IMR-90 (cell line): ENCODE measurements at regions of chr20 and their contacts with region 1.

Region 1: GRCh38 chr20:11544029-11544678 is 373.5 kb upstream of the BTBD3 start:
- DNase-seq: peak; percentile 75
- ATAC-seq: peak; percentile 82
- H3K4me3 ChIP-seq: no peak overlapping the region; the same call in 1 of the 2 replicates
- H3K27ac ChIP-seq: no peak overlapping the region
- H3K4me1 ChIP-seq: no peaks in the 10 kb centered on the region; the same call in none of the 2 replicates
- H3K27me3 ChIP-seq: peaks cover 4% of the 10 kb centered on the region; the same call in 1 of the 2 replicates
- CTCF ChIP-seq: peak; percentile 71
- POLR2A ChIP-seq: no peak
- RAD21 ChIP-seq: peak; percentile 87

Region 2: GRCh38 chr20:9616833-9617489 is 1927.2 kb before region 1 on chr20:
- CTCF ChIA-PET with region 1: no interaction called
- POLR2A ChIA-PET with region 1: no interaction called
- dilution Hi-C with region 1: no loop called
- in situ Hi-C with region 1: no loop called
- intact Hi-C with region 1: loop called (anchors 10 kb)
- DNase-seq: peak; percentile 66
- ATAC-seq: peak; percentile 81
- H3K4me3 ChIP-seq: no peak overlapping the region
- H3K27ac ChIP-seq: no peak overlapping the region
- H3K4me1 ChIP-seq: no peaks in the 10 kb centered on the region
- H3K27me3 ChIP-seq: peaks cover 17% of the 10 kb centered on the region
- CTCF ChIP-seq: peak; percentile 93
- POLR2A ChIP-seq: no peak
- RAD21 ChIP-seq: peak; percentile 87

Region 3: GRCh38 chr20:10434467-10434831 is 1109.7 kb before region 1 on chr20:
- CTCF ChIA-PET with region 1: interaction called, 4 read pairs
- POLR2A ChIA-PET with region 1: no interaction called
- dilution Hi-C with region 1: no loop called
- in situ Hi-C with region 1: no loop called
- intact Hi-C with region 1: loop called (anchors 10 kb)
- DNase-seq: peak; percentile 99
- ATAC-seq: peak; percentile 87
- H3K4me3 ChIP-seq: peak overlapping the region; percentile 89
- H3K27ac ChIP-seq: peak overlapping the region; percentile 33; the same call in 1 of the 2 replicates
- H3K4me1 ChIP-seq: peaks cover 2% of the 10 kb centered on the region; the same call in 1 of the 2 replicates
- H3K27me3 ChIP-seq: no peaks in the 10 kb centered on the region
- CTCF ChIP-seq: no peak
- POLR2A ChIP-seq: peak; percentile 95
- RAD21 ChIP-seq: no peak

Region 4: GRCh38 chr20:10553326-10553984 is 990.7 kb before region 1 on chr20:
- CTCF ChIA-PET with region 1: no interaction called
- POLR2A ChIA-PET with region 1: no interaction called
- dilution Hi-C with region 1: no loop called
- in situ Hi-C with region 1: loop called (anchors 5 kb)
- intact Hi-C with region 1: loop called (anchors 1 kb)
- DNase-seq: peak; percentile 82
- ATAC-seq: peak; percentile 88
- H3K4me3 ChIP-seq: no peak overlapping the region
- H3K27ac ChIP-seq: no peak overlapping the region
- H3K4me1 ChIP-seq: peaks cover 11% of the 10 kb centered on the region
- H3K27me3 ChIP-seq: no peaks in the 10 kb centered on the region
- CTCF ChIP-seq: peak; percentile 85
- POLR2A ChIP-seq: 0 out of 2 replicates have a peak, but pooled peaks have one; percentile 25
- RAD21 ChIP-seq: peak; percentile 95

Region 5: DNA sequence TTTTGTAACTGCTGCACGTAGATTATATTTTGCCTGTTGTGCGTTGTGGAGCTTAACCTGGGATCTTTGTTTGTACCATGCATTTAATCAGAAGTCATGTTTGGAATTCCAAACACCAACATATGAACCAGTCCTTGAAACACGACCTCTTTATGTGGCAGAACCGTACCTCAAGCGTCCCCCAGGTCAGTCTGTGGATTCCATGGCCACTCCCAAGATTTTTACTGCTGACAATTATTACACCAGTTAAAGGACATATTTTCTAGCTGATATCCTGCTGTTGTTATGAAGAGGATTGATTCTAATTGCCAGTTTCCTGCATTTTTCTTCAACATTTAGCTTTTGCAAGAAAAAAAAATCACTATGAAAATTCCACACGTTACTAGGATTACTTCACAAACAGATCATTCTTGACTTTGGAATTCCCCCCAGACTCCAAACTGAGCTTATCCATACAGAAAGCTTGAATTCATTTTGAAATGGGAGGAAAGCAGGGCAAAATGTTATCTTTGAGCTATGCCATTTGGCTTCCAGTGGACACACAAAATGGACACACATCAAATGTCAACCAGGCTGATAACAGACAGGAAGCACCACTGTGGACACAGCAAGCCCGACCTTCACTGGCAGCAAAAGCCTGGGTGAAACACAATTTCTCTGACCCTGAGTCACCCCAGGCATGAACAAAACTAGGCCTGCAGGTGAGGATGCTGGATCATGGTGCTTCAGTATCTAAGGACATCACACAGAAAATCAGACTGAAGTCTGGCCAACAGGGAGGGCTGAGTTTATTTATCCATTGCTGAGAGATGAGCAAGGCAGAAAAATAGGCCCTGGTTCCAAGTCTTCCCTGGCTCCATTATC is 327.5 kb before region 1 on chr20:
- CTCF ChIA-PET with region 1: no interaction called
- POLR2A ChIA-PET with region 1: no interaction called
- dilution Hi-C with region 1: no loop called
- in situ Hi-C with region 1: no loop called
- intact Hi-C with region 1: loop called (anchors 5 kb)
- DNase-seq: peak; percentile 82
- ATAC-seq: peak; percentile 80
- H3K4me3 ChIP-seq: no peak overlapping the region
- H3K27ac ChIP-seq: peak overlapping the region; percentile 85
- H3K4me1 ChIP-seq: peaks cover 12% of the 10 kb centered on the region
- H3K27me3 ChIP-seq: no peaks in the 10 kb centered on the region
- CTCF ChIP-seq: no peak
- POLR2A ChIP-seq: no peak
- RAD21 ChIP-seq: no peak

Region 6: DNA sequence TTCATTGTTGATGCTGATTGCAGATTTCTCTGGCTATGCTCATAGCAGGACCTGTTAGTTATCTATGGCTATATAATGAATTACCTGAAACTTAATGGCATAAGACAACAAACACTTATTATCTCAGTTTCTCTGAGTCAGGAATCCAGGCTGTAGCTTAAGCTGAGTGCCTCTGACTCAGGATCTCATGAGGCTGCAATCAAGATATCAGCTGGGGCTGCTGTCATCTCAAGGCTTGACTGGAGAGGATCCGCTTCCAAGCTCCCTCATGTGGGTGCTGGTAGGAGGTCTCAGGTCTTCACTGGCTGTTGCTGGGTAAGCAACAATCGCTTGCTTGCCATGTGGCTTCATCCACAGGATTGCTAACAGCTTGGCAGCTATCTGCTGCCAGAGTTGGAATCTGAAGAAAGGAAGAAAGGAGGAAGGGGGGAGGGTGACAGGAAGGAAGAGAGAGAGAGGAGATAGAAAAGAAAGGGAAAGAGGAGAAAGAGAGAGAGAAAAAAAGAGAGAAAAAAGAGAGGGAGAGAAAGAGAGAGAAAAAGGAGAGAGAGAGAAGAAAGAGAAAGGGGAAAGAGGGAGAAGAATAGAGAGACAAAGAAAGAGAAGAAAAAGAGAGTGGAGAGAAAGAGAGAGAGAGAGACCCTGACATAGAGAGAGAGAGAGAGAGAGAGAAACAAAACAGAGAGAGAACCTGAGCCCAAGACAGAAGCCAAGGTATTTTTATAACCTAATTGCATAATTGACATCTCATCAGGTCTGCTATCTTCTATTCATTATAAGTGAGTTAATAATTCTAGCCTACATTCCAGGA is 205.5 kb before region 1 on chr20:
- CTCF ChIA-PET with region 1: no interaction called
- POLR2A ChIA-PET with region 1: no interaction called
- dilution Hi-C with region 1: no loop called
- in situ Hi-C with region 1: no loop called
- intact Hi-C with region 1: no loop called
- DNase-seq: peak; percentile 74
- ATAC-seq: no peak
- H3K4me3 ChIP-seq: no peak overlapping the region
- H3K27ac ChIP-seq: no peak overlapping the region
- H3K4me1 ChIP-seq: 0 out of 2 replicates have a peak, but pooled peaks cover 2% of the 10 kb centered on the region
- H3K27me3 ChIP-seq: peaks cover 4% of the 10 kb centered on the region; the same call in 1 of the 2 replicates
- CTCF ChIP-seq: no peak
- POLR2A ChIP-seq: no peak
- RAD21 ChIP-seq: no peak

Region 7: GRCh38 chr20:11350126-11351005 is 193.8 kb before region 1 on chr20:
- CTCF ChIA-PET with region 1: no interaction called
- POLR2A ChIA-PET with region 1: no interaction called
- dilution Hi-C with region 1: no loop called
- in situ Hi-C with region 1: no loop called
- intact Hi-C with region 1: loop called (anchors 5 kb)
- DNase-seq: peak; percentile 80
- ATAC-seq: peak; percentile 86
- H3K4me3 ChIP-seq: no peak overlapping the region
- H3K27ac ChIP-seq: peak overlapping the region; percentile 28; the same call in 1 of the 2 replicates
- H3K4me1 ChIP-seq: peaks cover 10% of the 10 kb centered on the region
- H3K27me3 ChIP-seq: no peaks in the 10 kb centered on the region
- CTCF ChIP-seq: 0 out of 2 replicates have a peak, but pooled peaks have one; percentile 25
- POLR2A ChIP-seq: no peak
- RAD21 ChIP-seq: peak; percentile 30; the same call in 1 of the 2 replicates

Region 8: GRCh38 chr20:12318043-12318442 is 773.9 kb after region 1 on chr20:
- CTCF ChIA-PET with region 1: no interaction called
- POLR2A ChIA-PET with region 1: no interaction called
- dilution Hi-C with region 1: no loop called
- in situ Hi-C with region 1: no loop called
- intact Hi-C with region 1: no loop called
- DNase-seq: no peak
- ATAC-seq: no peak
- H3K4me3 ChIP-seq: no peak overlapping the region
- H3K27ac ChIP-seq: no peak overlapping the region
- H3K4me1 ChIP-seq: no peaks in the 10 kb centered on the region
- H3K27me3 ChIP-seq: no peaks in the 10 kb centered on the region
- CTCF ChIP-seq: no peak
- POLR2A ChIP-seq: no peak
- RAD21 ChIP-seq: no peak